H1 (cell line): ENCODE measurements at regions of chr1 and their contacts with region 1.

Region 1: GRCh38 chr1:184222652-184223052 is 164.2 kb upstream of the C1orf21 start:
- DNase-seq: peak in 1 of 2 experiments; percentile 83
- H3K4me3 ChIP-seq: no peak overlapping the region
- H3K27ac ChIP-seq: no peak overlapping the region
- H3K4me1 ChIP-seq: no peaks in the 10 kb centered on the region
- H3K27me3 ChIP-seq: peaks cover 1 to 14% (median 9%) of the 10 kb centered on the region in 4 experiments
- CTCF ChIP-seq: peak; percentile 83 to 88 (median 83)
- EP300 ChIP-seq: no peak
- POLR2A ChIP-seq: no peak
- RAD21 ChIP-seq: peak; percentile 83 to 90

Region 2: DNA sequence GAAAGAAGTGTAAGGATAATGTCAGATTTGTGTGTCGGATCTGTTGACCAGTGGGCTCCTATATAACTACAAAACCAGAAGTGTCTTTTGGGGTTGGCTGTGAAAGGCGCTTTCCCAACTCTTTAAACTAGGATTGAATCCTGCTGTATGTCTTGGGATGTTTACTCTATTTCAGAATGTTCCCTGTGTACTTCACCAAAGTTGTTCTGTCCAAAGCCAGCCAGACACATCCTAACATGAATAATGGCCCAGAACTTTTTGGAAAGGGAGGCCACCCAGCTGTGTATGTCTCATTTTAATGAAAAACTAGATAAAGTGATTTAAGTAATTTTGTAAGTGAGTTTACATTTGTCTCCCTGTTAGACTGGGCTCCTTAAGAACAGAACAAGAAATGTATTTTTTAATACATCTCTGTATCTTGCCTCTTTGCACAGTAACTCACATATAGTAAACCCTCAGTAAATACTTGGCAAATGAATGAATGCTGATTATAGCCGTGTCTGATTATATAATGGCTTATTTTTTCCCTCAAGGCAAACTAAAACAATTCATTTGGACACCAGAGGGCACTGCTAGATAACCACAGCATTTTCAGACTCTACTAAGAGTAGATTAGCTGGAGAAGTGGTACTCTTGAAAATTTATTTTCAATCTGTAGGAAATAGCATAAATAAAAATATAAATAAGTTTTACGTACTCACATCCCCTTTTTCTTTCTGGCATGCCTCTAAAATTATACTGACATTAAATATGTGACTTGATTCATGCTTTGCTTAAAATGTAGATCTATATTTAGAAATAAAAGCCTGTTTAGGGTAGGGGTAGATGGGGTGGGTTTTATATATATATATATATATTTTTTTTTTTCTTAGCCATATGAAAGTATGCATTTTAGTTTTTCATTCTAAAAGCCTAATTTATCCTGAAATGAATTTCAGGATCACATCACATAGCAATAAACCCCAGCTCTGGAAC is 147.3 kb before region 1 on chr1:
- CTCF ChIA-PET with region 1: interaction called, 36 read pairs
- POLR2A ChIA-PET with region 1: no interaction called
- DNase-seq: no peak
- H3K4me3 ChIP-seq: no peak overlapping the region
- H3K27ac ChIP-seq: no peak overlapping the region
- H3K4me1 ChIP-seq: no peaks in the 10 kb centered on the region
- H3K27me3 ChIP-seq: no peaks in the 10 kb centered on the region
- CTCF ChIP-seq: peak in 2 of 3 experiments; percentile 45 to 59; a peak in 2 of 4 replicates
- EP300 ChIP-seq: no peak
- POLR2A ChIP-seq: no peak
- RAD21 ChIP-seq: peak; percentile 85 to 88

Region 3: DNA sequence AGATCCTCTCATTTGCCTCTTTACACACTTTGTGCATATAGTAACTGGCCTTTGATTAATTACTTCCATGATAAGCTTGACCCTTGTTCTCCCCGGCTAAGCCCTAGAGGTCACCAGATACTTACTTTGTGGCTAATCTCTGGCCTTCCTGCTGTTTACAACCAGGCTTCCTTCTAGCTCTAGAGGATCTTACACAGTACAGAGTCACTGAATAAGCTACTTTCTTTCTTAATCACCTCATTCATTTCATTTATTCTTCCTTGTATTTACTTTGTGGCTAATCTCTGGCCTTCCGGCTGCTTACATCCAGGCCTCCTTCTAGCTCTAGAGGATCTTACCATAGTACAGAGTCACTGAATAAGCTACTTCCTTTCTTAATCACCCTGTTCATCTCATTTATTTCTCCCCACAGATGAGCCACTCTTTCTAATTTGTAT is 19.9 kb after region 1 on chr1:
- CTCF ChIA-PET with region 1: interaction called, 10 read pairs
- POLR2A ChIA-PET with region 1: no interaction called
- DNase-seq: no peak
- H3K4me3 ChIP-seq: no peak overlapping the region
- H3K27ac ChIP-seq: no peak overlapping the region
- H3K4me1 ChIP-seq: no peaks in the 10 kb centered on the region
- H3K27me3 ChIP-seq: no peaks in the 10 kb centered on the region
- CTCF ChIP-seq: peak in 2 of 3 experiments; percentile 51 to 55; a peak in 3 of 4 replicates
- EP300 ChIP-seq: no peak
- POLR2A ChIP-seq: no peak
- RAD21 ChIP-seq: peak; percentile 85 to 87